ENCODE measurements at regions of chr4 and their contacts with region 1.

Region 1: DNA sequence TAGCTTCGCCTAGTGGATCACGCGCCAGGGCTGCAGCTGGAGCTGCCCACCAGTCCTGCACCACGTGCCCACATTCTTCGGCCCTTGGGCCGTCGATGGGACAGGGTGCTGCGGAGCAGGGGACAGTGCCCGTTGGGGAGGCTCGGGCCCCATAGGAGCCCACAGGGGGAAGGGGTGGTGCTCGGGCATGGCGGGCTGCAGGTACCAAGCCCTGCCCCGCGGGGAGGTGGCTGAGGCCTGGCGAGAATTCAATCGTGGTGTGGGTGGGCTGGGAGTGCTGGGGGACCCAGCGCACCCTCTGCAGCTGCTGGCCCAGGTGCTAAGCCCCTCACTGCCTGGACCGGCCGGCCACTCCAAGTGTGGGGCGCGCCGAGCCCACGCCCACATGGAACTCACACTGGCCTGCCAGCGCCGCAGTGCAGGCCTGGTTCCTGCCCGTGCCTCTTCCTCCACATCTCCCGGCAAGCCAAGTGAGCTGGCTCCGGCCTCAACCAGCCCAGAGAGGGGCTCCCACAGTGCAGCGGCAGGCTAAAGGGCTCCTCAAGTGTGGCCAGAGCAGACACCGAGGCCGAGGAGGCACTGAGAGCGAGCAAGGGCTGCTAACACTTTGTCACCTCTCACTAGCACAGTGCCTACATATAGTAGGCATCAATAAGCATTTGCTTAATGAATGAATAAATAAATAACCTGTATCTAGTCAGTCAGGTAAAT is 11.7 kb downstream of the SCFD2 start:
- DNase-seq: no peak
- H3K4me3 ChIP-seq: no peak overlapping the region
- CTCF ChIP-seq: no peak

Region 2: GRCh38 chr4:53060278-53060677 is 293.9 kb before region 1 on chr4:
- in situ Hi-C with region 1: loop called (anchors 5 kb)
- DNase-seq: no peak
- H3K4me3 ChIP-seq: no peak overlapping the region
- CTCF ChIP-seq: no peak

Region 3: GRCh38 chr4:53273726-53274125 is 80.4 kb before region 1 on chr4:
- in situ Hi-C with region 1: no loop called
- DNase-seq: peak; percentile 24
- H3K4me3 ChIP-seq: no peak overlapping the region
- CTCF ChIP-seq: no peak

Region 4: DNA sequence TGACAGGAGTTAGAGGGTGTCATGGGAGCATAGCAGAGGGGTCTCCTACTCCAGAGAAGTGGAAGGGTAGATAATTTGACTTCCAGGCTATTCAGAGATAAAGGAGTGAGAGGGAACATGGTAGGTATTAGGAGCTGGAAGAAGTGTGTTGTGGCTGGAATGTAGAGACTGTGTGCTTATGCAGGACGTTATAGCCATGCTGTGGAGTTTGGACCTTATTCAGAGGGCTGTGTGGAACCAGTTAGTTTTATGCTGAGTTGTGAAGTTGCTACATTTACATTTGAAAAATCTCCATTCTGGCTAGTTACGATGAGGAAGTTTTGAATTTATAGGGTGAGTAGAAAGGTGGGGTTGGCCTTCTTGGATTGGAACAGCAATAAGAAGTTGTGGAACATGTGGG is 90.8 kb after region 1 on chr4:
- in situ Hi-C with region 1: no loop called
- DNase-seq: no peak
- H3K4me3 ChIP-seq: no peak overlapping the region
- CTCF ChIP-seq: no peak

Measured in astrocyte of the cerebellum (primary cell).